Activated CD4-positive, alpha-beta T cell treated with anti-CD3 and anti-CD28 coated beads, Interleukin-2, amount 10 ng/mL, durations not matched to agents 24 days and 14 days (primary cell): ENCODE measurements at regions of chr2 and their contacts with region 1.

Region 1: GRCh38 chr2:70301344-70302194 is at the start of gene FAM136A:
- DNase-seq: peak; percentile 97
- H3K4me3 Mint-ChIP-seq: peak within 1 kb of the TSS; percentile 91
- H3K27ac Mint-ChIP-seq: peak within 1 kb of the TSS; percentile 93
- H3K4me1 Mint-ChIP-seq: peaks cover 39% of the 10 kb centered on the region
- H3K27me3 Mint-ChIP-seq: no peaks in the 10 kb centered on the region
- total RNA-seq, gene FAM136A: 85.5 and 89.7 TPM in 2 replicates

Region 2: DNA sequence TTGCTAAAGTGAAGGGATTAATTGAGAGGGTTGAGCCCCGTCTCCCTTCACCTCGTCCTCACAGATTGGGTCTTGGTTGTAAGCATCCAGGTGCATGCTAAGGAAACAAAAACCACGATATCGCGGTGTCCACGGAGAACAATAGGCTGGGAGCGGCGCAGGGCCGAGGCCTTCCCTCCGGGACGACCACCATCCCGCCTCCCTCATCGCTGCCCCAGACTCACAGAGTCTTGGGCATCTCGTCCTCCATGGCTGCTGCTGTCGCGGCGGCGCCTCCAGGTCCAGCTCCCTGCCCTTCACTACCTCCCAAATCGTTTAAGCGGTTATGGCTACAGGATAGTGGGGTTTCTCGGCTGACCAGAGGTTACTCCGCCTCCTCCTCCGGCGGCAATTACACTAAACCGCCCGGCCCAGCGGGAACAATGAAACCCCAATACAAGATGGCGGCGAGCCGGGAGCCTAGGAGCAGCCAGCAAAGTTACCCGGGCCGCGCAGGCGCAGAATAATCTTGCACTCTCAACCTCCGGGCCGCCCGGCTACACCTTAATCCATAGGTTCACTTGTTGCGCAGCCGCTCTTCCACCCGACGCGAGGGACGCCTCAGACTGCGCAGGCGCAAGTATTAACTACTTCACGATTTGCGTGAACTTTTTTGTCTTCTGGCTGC is 53.3 kb before region 1 on chr2 and contains the start of gene TIA1:
- intact Hi-C with region 1: loop called (anchors 2 kb)
- DNase-seq: peak; percentile 99
- H3K4me3 Mint-ChIP-seq: peak within 1 kb of the TSS; percentile 96
- H3K27ac Mint-ChIP-seq: peak within 1 kb of the TSS; percentile 99
- H3K4me1 Mint-ChIP-seq: peaks cover 26% of the 10 kb centered on the region
- H3K27me3 Mint-ChIP-seq: peaks cover 3% of the 10 kb centered on the region
- total RNA-seq, gene TIA1: 104 and 105 TPM in 2 replicates

Region 3: DNA sequence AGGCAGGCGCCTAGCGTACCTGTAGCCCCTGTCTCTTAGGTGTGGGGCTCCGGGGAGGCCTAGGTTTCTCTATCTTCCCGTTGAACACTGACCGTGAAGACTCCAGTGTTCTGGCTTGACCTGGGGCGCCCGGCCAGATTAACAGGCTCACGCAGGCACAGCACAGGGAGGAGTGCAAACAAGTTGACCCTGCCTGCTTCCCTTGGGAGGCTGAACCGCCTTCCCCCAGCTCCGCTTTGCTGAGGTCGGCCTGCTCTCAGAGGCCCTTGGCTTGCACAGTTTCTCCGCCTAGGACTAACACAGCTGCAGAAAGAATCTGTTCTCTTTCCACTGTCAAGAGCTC is 43.1 kb before region 1 on chr2:
- intact Hi-C with region 1: no loop called
- DNase-seq: no peak
- H3K4me3 Mint-ChIP-seq: peak overlapping the region; percentile 91
- H3K27ac Mint-ChIP-seq: no peak overlapping the region
- H3K4me1 Mint-ChIP-seq: peaks cover 27% of the 10 kb centered on the region
- H3K27me3 Mint-ChIP-seq: no peaks in the 10 kb centered on the region

Region 4: GRCh38 chr2:70616168-70616694 is 314.7 kb after region 1 on chr2:
- intact Hi-C with region 1: loop called (anchors 1 kb)
- DNase-seq: no peak
- H3K4me3 Mint-ChIP-seq: no peak overlapping the region
- H3K27ac Mint-ChIP-seq: no peak overlapping the region
- H3K4me1 Mint-ChIP-seq: peaks cover 2% of the 10 kb centered on the region
- H3K27me3 Mint-ChIP-seq: peaks cover 17% of the 10 kb centered on the region

Region 5: GRCh38 chr2:70789304-70790135 is 488.0 kb after region 1 on chr2:
- intact Hi-C with region 1: loop called (anchors 5 kb)
- DNase-seq: peak; percentile 90
- H3K4me3 Mint-ChIP-seq: peak overlapping the region; percentile 80
- H3K27ac Mint-ChIP-seq: no peak overlapping the region
- H3K4me1 Mint-ChIP-seq: peaks cover 7% of the 10 kb centered on the region
- H3K27me3 Mint-ChIP-seq: peaks cover 60% of the 10 kb centered on the region

Region 6: GRCh38 chr2:70948337-70949003 is 646.9 kb after region 1 on chr2:
- intact Hi-C with region 1: loop called (anchors 2 kb)
- DNase-seq: peak; percentile 93
- H3K4me3 Mint-ChIP-seq: peak overlapping the region; percentile 83
- H3K27ac Mint-ChIP-seq: peak overlapping the region; percentile 58
- H3K4me1 Mint-ChIP-seq: peaks cover 16% of the 10 kb centered on the region
- H3K27me3 Mint-ChIP-seq: peaks cover 23% of the 10 kb centered on the region